PC-3 (cell line): ENCODE measurements at regions of chr14 and their contacts with region 1.

Region 1: DNA sequence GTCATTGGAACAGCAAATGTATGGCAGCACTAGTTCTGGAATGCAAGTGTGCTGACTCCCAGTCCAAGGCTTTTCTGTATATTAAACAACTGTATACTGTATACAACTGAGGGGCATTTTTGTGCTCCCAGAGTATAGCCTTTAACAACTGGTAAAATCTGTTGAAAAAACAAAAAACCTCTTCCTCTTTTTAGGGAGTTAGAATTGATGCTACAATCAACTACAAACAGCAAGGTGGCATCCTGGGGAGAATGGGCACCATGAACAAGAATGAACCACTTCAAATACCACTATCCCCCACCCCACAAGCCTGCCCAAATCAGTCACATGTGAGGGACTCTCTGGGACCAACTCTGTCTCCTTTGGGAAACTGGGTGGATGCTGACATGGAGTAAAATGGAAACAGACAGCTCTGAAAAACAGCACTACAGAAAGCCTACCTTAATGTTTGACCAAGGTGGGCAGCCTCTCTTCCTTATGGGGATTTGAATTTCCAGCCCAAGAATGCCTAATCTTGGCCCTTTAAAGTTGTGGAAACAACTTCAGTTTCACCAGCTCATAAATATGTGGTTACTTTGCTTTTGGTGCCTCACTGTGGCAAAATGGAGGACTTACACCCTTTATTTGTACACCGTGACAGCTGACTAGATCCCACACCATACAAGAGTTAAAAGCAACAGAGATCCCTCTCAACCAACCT is 7.5 kb downstream of the VTI1B start:
- DNase-seq: peak; percentile 69
- ATAC-seq: peak; percentile 90
- H3K4me3 ChIP-seq: no peak overlapping the region
- H3K27ac ChIP-seq: no peak overlapping the region
- H3K4me1 ChIP-seq: no peaks in the 10 kb centered on the region
- H3K27me3 ChIP-seq: no peaks in the 10 kb centered on the region
- CTCF ChIP-seq: peak; percentile 86

Region 2: DNA sequence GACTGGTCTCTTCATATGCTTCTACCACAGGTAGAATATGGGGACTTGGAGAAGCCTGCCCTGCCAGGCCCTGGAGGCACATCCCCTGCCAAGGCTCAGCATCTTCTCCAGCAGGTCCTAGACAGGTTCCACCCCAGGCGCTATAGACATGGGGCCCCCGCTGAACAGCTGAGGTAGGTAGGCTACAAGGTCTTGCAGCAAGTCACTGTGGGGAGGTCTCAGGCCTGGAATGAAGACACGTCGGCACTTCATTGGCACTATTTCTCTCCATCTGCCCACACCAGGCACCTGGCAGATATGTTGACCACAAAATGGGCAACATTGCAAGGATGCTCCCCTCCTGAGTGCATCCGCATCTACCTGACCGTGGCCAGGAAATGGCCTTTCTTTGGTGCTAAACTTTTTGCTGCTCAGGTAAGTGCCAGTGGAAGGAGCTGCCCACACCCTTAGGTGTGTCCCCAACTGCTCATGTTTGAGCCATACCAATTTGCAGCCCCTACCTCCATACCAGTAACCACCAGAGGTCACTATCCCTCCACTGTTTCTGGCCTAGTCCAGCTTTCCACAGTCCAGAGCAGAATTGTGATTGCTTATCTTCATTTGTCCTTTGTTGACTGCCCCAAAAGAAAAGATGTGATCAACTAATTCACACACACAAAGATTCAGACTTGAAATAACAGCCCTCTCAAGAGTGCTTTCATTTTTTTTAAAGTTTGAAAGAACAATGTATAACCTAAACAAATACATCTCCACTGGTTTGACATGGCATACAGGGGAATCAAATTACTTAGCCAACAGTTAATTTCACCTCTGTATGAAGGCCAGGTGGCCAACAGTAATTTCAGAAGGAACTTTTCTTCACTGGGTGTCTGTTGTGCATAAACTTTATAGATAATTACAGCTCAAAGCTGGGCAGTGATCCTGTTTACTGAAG is 82.9 kb before region 1 on chr14:
- CTCF ChIA-PET with region 1: interaction called, 10 read pairs
- POLR2A ChIA-PET with region 1: no interaction called
- intact Hi-C with region 1: loop called (anchors 1 kb)
- DNase-seq: peak; percentile 72
- ATAC-seq: peak; percentile 99
- H3K4me3 ChIP-seq: no peak overlapping the region
- H3K27ac ChIP-seq: no peak overlapping the region
- H3K4me1 ChIP-seq: no peaks in the 10 kb centered on the region
- H3K27me3 ChIP-seq: no peaks in the 10 kb centered on the region
- CTCF ChIP-seq: peak; percentile 93

Region 3: GRCh38 chr14:67599698-67600561 is 67.0 kb before region 1 on chr14 and contains the start of gene PIGH:
- CTCF ChIA-PET with region 1: interaction called, 14 read pairs
- POLR2A ChIA-PET with region 1: interaction called, 7 read pairs
- intact Hi-C with region 1: loop called (anchors 1 kb)
- DNase-seq: peak; percentile 88
- ATAC-seq: peak; percentile 97
- H3K4me3 ChIP-seq: peak within 1 kb of the TSS; percentile 91
- H3K27ac ChIP-seq: peak within 1 kb of the TSS; percentile 39
- H3K4me1 ChIP-seq: peaks cover 14% of the 10 kb centered on the region; the same call in 1 of the 2 replicates
- H3K27me3 ChIP-seq: no peaks in the 10 kb centered on the region
- CTCF ChIP-seq: peak; percentile 63
- total RNA-seq, gene PIGH: 63.8 and 66.4 TPM in 2 replicates

Region 4: GRCh38 chr14:68027276-68027675 is 360.4 kb after region 1 on chr14:
- CTCF ChIA-PET with region 1: no interaction called
- POLR2A ChIA-PET with region 1: no interaction called
- intact Hi-C with region 1: no loop called
- DNase-seq: peak; percentile 25
- ATAC-seq: no peak
- H3K4me3 ChIP-seq: no peak overlapping the region
- H3K27ac ChIP-seq: no peak overlapping the region
- H3K4me1 ChIP-seq: peaks cover 6% of the 10 kb centered on the region; the same call in 1 of the 2 replicates
- H3K27me3 ChIP-seq: no peaks in the 10 kb centered on the region
- CTCF ChIP-seq: no peak